Caco-2 (cell line): ENCODE measurements at regions of chr12 and their contacts with region 1.

Region 1: GRCh38 chr12:93121729-93122488 is 192.8 kb upstream of the EEA1 start:
- DNase-seq: no peak
- H3K4me3 ChIP-seq: peak overlapping the region; percentile 24
- H3K4me3 Mint-ChIP-seq: peak overlapping the region; percentile 74
- H3K27ac Mint-ChIP-seq: peak overlapping the region; percentile 95
- H3K4me1 ChIP-seq: peaks cover 67% of the 10 kb centered on the region
- H3K4me1 Mint-ChIP-seq: peaks cover 50% of the 10 kb centered on the region
- H3K27me3 ChIP-seq: no peaks in the 10 kb centered on the region
- H3K27me3 Mint-ChIP-seq: no peaks in the 10 kb centered on the region
- CTCF ChIP-seq: no peak

Region 2: GRCh38 chr12:92854344-92854743 is 267.6 kb before region 1 on chr12:
- CTCF ChIA-PET with region 1: no interaction called
- POLR2A ChIA-PET with region 1: no interaction called
- intact Hi-C with region 1: no loop called
- DNase-seq: peak in 1 of 2 experiments; percentile 8
- H3K4me3 ChIP-seq: no peak overlapping the region
- H3K4me3 Mint-ChIP-seq: no peak overlapping the region
- H3K27ac Mint-ChIP-seq: no peak overlapping the region
- H3K4me1 ChIP-seq: peaks cover 10% of the 10 kb centered on the region; the same call in 1 of the 2 replicates
- H3K4me1 Mint-ChIP-seq: peaks cover 9% of the 10 kb centered on the region
- H3K27me3 ChIP-seq: no peaks in the 10 kb centered on the region
- H3K27me3 Mint-ChIP-seq: no peaks in the 10 kb centered on the region
- CTCF ChIP-seq: no peak

Region 3: DNA sequence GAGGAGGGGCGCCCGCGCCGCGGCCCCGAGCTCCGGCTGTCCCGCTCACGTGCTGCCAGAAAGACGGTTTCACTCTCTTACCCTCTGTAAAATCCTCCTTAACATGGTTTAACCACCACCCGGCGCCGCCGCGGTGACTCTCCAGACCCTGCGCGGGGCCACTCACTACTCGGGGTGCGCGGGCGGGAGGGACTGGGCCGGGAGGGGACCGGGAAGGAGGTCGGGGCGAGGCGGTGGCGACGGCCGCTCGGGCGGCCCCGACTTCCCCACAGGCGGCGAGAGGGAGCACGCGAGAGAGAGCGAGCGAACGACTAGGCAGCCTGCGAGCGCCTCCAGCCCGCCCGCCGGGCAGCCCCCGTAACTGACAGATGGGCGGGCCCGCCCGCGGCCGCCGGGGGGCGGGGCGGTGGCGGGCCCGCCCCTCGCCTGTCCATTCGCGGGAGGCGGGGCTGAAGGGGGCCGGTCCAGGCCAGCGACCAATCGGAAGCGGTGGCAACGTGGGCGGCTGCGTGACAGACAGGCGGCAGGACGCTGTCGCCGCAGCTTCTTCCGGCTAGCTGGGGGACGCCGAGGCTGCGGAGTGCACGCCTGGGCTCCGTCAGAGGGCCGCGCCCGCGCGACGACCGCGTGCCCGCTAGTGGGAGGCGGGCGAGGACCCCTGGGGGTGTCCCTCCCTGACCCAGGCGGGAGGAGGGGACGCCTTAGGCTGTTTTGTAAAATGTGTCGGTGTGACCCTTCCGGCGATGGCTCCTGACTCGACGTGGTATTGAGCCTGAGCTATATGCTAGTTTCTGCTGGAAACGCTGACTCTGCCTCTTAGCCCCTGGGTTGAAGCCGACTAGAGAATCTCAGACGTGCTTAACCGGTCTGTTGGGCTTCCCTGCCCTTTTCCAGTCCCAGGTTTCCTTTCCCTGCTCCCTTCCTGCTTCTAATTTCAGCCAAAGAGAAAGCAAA is 192.7 kb before region 1 on chr12 and contains the start of gene EEA1:
- CTCF ChIA-PET with region 1: no interaction called
- POLR2A ChIA-PET with region 1: interaction called, 12 read pairs
- intact Hi-C with region 1: no loop called
- DNase-seq: peak; percentile 97 to 98
- H3K4me3 ChIP-seq: peak within 1 kb of the TSS; percentile 88
- H3K4me3 Mint-ChIP-seq: peak within 1 kb of the TSS; percentile 90
- H3K27ac Mint-ChIP-seq: peak within 1 kb of the TSS; percentile 93
- H3K4me1 ChIP-seq: peaks cover 54% of the 10 kb centered on the region
- H3K4me1 Mint-ChIP-seq: peaks cover 50% of the 10 kb centered on the region
- H3K27me3 ChIP-seq: no peaks in the 10 kb centered on the region
- H3K27me3 Mint-ChIP-seq: no peaks in the 10 kb centered on the region
- CTCF ChIP-seq: peak in 1 of 2 experiments; percentile 12
- total RNA-seq, gene EEA1: 68.9 TPM in 2 replicates

Region 4: GRCh38 chr12:93080994-93081797 is 40.7 kb before region 1 on chr12:
- CTCF ChIA-PET with region 1: no interaction called
- POLR2A ChIA-PET with region 1: interaction called, 6 read pairs
- intact Hi-C with region 1: loop called (anchors 1 kb)
- DNase-seq: peak; percentile 74 to 86
- H3K4me3 ChIP-seq: no peak overlapping the region
- H3K4me3 Mint-ChIP-seq: peak overlapping the region; percentile 50
- H3K27ac Mint-ChIP-seq: peak overlapping the region; percentile 92
- H3K4me1 ChIP-seq: peaks cover 51% of the 10 kb centered on the region
- H3K4me1 Mint-ChIP-seq: peaks cover 36% of the 10 kb centered on the region
- H3K27me3 ChIP-seq: no peaks in the 10 kb centered on the region
- H3K27me3 Mint-ChIP-seq: no peaks in the 10 kb centered on the region
- CTCF ChIP-seq: no peak

Region 5: GRCh38 chr12:93133376-93133775 is 11.5 kb after region 1 on chr12:
- CTCF ChIA-PET with region 1: no interaction called
- POLR2A ChIA-PET with region 1: no interaction called
- intact Hi-C with region 1: no loop called
- DNase-seq: no peak
- H3K4me3 ChIP-seq: no peak overlapping the region
- H3K4me3 Mint-ChIP-seq: no peak overlapping the region
- H3K27ac Mint-ChIP-seq: no peak overlapping the region
- H3K4me1 ChIP-seq: peaks cover 52% of the 10 kb centered on the region
- H3K4me1 Mint-ChIP-seq: peaks cover 50% of the 10 kb centered on the region
- H3K27me3 ChIP-seq: no peaks in the 10 kb centered on the region
- H3K27me3 Mint-ChIP-seq: no peaks in the 10 kb centered on the region
- CTCF ChIP-seq: no peak

Region 6: GRCh38 chr12:93154753-93155480 is 33.0 kb after region 1 on chr12:
- CTCF ChIA-PET with region 1: interaction called, 10 read pairs
- POLR2A ChIA-PET with region 1: interaction called, 4 read pairs
- intact Hi-C with region 1: loop called (anchors 1 kb)
- DNase-seq: peak; percentile 64 to 68
- H3K4me3 ChIP-seq: no peak overlapping the region
- H3K4me3 Mint-ChIP-seq: peak overlapping the region; percentile 56
- H3K27ac Mint-ChIP-seq: peak overlapping the region; percentile 80
- H3K4me1 ChIP-seq: peaks cover 41% of the 10 kb centered on the region
- H3K4me1 Mint-ChIP-seq: peaks cover 38% of the 10 kb centered on the region
- H3K27me3 ChIP-seq: no peaks in the 10 kb centered on the region
- H3K27me3 Mint-ChIP-seq: no peaks in the 10 kb centered on the region
- CTCF ChIP-seq: no peak

Region 7: GRCh38 chr12:93223440-93224426 is 101.8 kb after region 1 on chr12:
- CTCF ChIA-PET with region 1: no interaction called
- POLR2A ChIA-PET with region 1: no interaction called
- intact Hi-C with region 1: no loop called
- DNase-seq: no peak
- H3K4me3 ChIP-seq: no peak overlapping the region
- H3K4me3 Mint-ChIP-seq: no peak overlapping the region
- H3K27ac Mint-ChIP-seq: no peak overlapping the region
- H3K4me1 ChIP-seq: no peaks in the 10 kb centered on the region
- H3K4me1 Mint-ChIP-seq: no peaks in the 10 kb centered on the region
- H3K27me3 ChIP-seq: no peaks in the 10 kb centered on the region
- H3K27me3 Mint-ChIP-seq: no peaks in the 10 kb centered on the region
- CTCF ChIP-seq: no peak

Region 8: DNA sequence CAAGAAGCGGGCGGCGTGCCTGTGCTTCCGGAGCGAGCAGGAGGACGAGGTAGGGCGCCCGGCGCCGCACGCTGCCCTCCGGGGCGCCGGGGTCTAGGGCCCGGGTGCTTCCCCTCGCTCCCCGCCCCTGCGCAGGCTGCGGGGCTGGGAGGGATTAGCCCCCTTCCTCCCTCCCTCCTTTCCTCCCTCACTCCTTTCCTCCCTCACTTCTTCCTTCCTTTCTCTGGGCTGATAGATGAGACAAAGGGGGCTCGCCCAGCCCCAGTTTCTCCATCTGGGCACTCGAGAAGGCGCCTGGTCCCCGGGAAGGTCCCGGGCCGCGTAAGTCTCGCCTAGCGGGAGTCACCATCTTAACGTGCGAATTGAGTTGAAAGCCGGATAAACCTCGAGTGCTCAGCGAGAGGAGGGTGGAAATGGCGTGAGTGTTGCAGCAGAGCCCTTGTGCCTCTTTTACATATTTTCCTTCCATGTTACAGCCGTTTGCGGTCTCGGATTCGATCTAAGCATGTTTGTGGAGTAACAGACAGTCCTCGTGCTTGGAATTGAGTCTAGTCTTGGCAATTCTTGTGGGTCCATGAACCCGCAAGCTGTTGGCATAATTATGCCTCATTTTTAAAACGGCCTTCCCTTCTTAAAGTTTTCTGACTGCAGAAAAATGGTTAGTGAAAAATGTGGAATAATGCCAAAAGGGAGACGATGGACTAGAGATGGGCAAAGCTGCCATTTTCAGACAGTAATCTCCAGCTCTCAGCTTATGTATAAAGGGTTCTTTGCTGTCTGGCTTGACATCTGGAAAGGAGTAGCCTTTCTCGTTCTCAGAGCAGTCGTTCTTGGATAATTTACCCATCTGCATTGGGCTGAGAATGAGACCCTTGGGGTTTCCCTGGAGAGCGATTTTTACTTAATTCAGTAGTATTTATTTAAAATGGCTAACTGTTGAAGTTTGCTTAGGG is 256.7 kb after region 1 on chr12:
- CTCF ChIA-PET with region 1: no interaction called
- POLR2A ChIA-PET with region 1: no interaction called
- intact Hi-C with region 1: loop called (anchors 1 kb)
- DNase-seq: peak in 1 of 2 experiments; percentile 26
- H3K4me3 ChIP-seq: peak overlapping the region; percentile 83
- H3K4me3 Mint-ChIP-seq: peak overlapping the region; percentile 80
- H3K27ac Mint-ChIP-seq: peak overlapping the region; percentile 90
- H3K4me1 ChIP-seq: peaks cover 36% of the 10 kb centered on the region
- H3K4me1 Mint-ChIP-seq: peaks cover 25% of the 10 kb centered on the region
- H3K27me3 ChIP-seq: no peaks in the 10 kb centered on the region
- H3K27me3 Mint-ChIP-seq: no peaks in the 10 kb centered on the region
- CTCF ChIP-seq: no peak